ENCODE measurements at regions of chr11 and their contacts with region 1.

Region 1: DNA sequence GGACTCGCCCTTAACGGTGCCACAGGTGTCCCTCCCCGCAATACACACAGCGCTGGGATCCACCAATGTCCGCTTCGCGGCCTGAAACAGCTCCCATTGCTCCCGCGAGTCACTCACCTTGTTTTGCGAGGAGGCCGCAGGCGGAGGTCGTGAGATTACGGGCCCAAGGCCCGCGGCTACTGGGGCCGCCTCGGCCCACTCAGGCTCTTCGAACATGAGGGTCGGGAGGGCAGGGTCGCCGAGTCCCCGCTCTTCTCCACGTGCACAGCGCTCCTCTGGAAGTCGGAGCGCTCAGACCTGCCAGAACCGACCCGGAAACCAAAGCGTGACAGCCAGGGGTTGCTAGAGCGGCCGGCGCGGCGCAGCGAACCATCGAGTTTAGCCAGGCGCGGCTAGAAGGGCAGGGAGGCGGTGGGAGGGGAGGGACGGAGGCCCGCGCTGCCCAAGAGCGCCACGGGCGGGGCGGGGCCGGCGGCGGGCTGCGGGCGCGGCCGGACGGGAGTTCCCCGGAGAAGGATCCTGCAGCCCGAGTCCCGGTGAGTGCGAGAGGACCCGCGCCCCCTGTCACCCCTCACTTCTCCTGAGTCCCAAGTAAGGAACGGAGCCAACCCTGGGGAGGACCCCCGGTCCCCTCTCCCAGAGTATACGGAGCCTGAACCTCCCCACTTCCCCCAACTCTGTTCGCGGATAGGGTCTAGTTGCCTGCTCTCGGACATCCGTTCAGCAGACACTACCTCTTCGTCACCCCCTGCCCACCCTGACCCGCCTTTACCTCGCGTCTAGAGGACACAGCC is at the starts of genes ILK and RRP8:
- DNase-seq: peak; percentile 94 to 98
- H3K4me3 ChIP-seq: peak within 1 kb of the TSS; percentile 73 to 96 (median 92)
- H3K27ac ChIP-seq: peak within 1 kb of the TSS; percentile 94 to 100 (median 99)
- H3K4me1 ChIP-seq: peaks cover 53 to 86% (median 80%) of the 10 kb centered on the region in 4 donors
- H3K27me3 ChIP-seq: no peaks in the 10 kb centered on the region
- CTCF ChIP-seq: peak in 3 of 7 experiments; percentile 11 to 39 (median 29)
- EP300 ChIP-seq: no peak
- POLR2A ChIP-seq: no peak
- total RNA-seq, gene ILK: 60.0 to 308 (median 123) TPM
- total RNA-seq, gene RRP8: 1.8 to 22.6 (median 7.6) TPM

Region 2: DNA sequence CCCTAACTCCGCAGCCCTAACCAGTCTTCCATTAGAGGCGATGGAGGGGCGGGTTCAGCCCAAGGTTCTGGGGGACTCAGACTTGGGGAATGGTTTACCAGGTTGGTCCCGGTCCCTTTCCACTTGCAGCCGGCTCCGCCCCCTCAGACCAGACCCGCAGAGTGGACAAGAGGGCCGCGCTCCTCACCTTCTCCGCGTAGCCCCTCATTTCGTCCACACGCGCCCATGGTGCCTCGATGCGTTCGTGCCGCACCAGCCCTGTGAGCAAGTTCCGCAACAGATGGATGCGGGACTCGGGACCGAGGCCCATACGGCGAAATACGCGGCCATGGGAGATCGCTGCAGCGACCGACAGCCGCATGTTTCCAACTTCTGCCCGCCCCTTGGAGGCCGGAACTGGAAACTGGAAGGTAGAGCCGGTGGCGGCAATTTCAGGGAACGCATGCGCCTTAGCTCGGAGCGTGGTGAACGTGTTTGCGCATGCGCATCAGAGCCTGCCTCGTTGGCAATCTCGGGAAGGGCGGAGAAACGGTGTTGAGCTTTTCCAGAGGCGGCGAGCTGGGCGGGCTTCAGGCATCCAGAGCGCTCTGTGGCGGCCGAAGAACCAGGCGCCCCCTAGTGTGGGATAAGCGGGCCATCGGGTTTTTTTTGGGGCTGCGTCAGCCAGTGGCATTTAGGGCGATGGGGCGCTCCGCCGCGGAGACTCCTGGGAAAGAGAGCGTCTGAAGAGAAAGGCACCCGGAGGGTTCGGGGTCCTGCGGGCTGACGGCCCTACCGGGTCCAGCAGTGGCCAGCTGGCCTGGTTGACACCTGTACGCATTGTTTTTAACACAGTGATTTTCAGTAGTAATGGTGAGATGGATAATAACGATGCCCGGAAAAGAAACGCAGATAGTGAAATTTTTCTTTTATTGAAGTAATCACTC is 79.7 kb after region 1 on chr11 and contains the start of gene MRPL17:
- intact Hi-C with region 1: loop called (anchors 10 kb)
- DNase-seq: peak; percentile 99 to 100
- H3K4me3 ChIP-seq: peak within 1 kb of the TSS; percentile 83 to 98 (median 90)
- H3K27ac ChIP-seq: peak within 1 kb of the TSS; percentile 86 to 96 (median 95)
- H3K4me1 ChIP-seq: peaks cover 13 to 28% (median 22%) of the 10 kb centered on the region in 4 donors
- H3K27me3 ChIP-seq: no peaks in the 10 kb centered on the region
- CTCF ChIP-seq: peak in 5 of 7 experiments; percentile 78 to 97 (median 82)
- EP300 ChIP-seq: no peak
- POLR2A ChIP-seq: peak in 1 of 4 donors; percentile 79
- total RNA-seq, gene MRPL17: 9.0 to 148 (median 20.4) TPM

Region 3: DNA sequence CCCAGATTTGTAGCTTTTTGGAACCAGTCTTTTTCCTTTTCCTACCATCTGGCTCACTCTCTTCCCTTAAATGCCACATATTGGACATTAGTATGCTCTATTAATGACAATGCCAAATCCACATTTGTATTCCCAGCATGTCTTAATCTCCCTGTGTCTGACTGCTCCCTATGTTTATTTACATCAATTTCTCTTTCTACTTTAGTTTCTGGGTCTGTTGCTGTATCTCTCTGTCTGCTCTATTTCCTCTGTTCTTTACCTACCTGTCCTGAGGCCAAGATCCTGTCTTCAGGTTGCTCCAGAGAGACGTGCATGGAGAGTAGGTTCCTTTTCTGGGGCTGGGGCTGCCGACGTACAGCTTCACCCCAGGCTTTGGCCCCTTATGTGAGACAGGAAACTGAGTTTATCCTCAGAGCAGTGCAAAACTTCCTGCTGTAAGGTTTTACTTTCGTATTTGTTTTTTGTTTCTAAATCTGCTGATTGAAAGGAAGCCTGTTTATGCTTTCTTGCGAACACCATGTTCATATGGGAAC is 142.7 kb after region 1 on chr11:
- intact Hi-C with region 1: no loop called
- DNase-seq: peak; percentile 28 to 49
- H3K4me3 ChIP-seq: peak overlapping the region; percentile 20 to 41 (median 28)
- H3K27ac ChIP-seq: peak overlapping the region; percentile 25 to 92 (median 77)
- H3K4me1 ChIP-seq: peaks cover 0 to 3% (median 0%) of the 10 kb centered on the region in 4 donors
- H3K27me3 ChIP-seq: no peaks in the 10 kb centered on the region
- CTCF ChIP-seq: no peak
- EP300 ChIP-seq: no peak
- POLR2A ChIP-seq: no peak

Measured in stomach (tissue), 19 donors.